Activated naive CD8-positive, alpha-beta T cell treated with anti-CD3 and anti-CD28 coated beads, Interleukin-2, amount 10 ng/mL, durations not matched to agents 7 days and 5 days (primary cell): ENCODE measurements at regions of chr20 and their contacts with region 1.

Region 1: GRCh38 chr20:53643031-53643832 is 49.6 kb upstream of the ZNF217 start:
- DNase-seq: peak; percentile 60
- ATAC-seq: peak; percentile 96
- H3K4me3 Mint-ChIP-seq: peak overlapping the region; percentile 75
- H3K27ac Mint-ChIP-seq: peak overlapping the region; percentile 96
- H3K4me1 Mint-ChIP-seq: peaks cover 43% of the 10 kb centered on the region
- H3K27me3 Mint-ChIP-seq: no peaks in the 10 kb centered on the region

Region 2: DNA sequence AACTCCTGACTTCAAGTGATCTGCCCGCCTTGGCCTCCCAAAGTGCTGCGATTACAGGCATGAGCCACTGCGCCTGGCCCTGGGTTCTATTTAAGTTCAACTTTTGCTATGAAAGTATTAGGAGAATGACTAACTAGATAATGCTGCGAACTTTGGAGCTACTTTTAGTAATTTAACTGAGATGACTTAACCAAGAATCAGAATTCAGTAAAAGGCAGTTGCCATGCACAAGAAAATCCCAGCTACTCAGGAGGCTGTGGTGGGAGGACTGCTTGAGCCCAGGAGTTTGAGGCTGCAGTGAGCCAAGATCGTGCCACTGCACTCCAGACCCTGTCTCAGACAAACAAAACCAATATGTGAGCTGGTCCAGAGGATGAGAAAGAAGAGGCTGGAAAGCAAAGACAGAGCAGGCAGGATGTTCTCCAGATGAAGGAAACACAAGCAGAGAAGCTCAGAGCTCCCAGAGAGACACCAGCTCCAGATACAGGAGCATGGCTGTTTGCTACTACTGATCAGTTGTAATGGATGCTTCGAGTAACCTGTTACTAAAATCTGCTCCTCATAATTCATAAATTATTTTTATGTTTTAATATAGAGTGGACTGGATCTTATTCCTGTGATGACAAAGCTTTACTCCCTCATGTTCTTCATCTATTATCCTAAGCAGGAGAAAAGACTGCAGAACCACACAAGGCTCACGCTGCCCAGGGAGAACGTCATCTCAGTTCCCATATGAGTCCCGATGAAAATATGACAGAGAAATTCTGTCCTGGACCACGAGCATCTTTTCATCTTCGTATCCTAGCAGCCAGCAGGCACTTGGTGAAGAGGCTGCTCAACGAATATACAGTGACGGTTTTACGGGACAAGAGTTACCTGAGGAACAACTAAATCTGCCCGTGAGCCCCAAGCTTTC is 73.4 kb before region 1 on chr20:
- POLR2A ChIA-PET with region 1: no interaction called
- DNase-seq: peak; percentile 9
- ATAC-seq: no peak
- H3K4me3 Mint-ChIP-seq: no peak overlapping the region
- H3K27ac Mint-ChIP-seq: no peak overlapping the region
- H3K4me1 Mint-ChIP-seq: peaks cover 52% of the 10 kb centered on the region
- H3K27me3 Mint-ChIP-seq: no peaks in the 10 kb centered on the region

Region 3: GRCh38 chr20:53611449-53611894 is 31.8 kb before region 1 on chr20:
- POLR2A ChIA-PET with region 1: interaction called, 15 read pairs
- DNase-seq: no peak
- ATAC-seq: no peak
- H3K4me3 Mint-ChIP-seq: no peak overlapping the region
- H3K27ac Mint-ChIP-seq: no peak overlapping the region
- H3K4me1 Mint-ChIP-seq: peaks cover 30% of the 10 kb centered on the region
- H3K27me3 Mint-ChIP-seq: no peaks in the 10 kb centered on the region

Region 4: DNA sequence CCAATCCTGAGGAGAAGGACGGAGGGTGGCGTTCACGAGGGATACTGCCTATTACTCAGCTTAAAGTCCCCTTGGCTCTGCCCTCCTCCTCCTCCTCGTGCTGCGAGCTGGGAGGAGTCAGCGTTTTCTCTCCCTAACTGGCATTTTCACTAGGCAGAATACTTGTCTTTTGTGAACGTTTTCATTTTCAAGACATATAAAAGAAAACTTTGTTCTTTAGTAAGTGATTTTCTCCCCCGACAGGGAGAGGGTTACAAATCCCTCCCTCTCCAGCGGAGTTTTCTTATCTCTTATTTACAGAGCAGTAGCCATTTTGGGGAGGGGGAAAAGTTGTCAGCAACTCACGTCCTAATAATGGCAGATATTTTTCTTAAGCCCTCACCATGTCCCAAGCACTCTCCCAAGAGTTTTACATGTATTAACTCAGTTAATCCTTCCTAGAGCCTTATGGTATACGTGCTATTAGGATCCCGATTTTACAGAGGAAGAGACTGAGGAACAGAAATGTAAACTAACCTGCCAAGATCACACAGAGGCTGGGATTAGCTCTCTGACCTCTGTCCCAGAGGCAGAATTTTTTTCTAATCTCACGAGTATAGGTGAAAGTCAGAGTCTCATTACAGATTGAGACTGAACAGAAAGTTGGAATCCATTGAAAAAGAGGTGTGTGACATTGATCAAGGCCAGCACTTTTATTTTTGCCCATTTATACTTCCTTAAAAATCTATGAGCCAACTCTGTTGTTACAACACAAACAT is 19.6 kb before region 1 on chr20:
- POLR2A ChIA-PET with region 1: interaction called, 31 read pairs
- DNase-seq: no peak
- ATAC-seq: peak; percentile 55
- H3K4me3 Mint-ChIP-seq: peak overlapping the region; percentile 80
- H3K27ac Mint-ChIP-seq: peak overlapping the region; percentile 98
- H3K4me1 Mint-ChIP-seq: peaks cover 41% of the 10 kb centered on the region
- H3K27me3 Mint-ChIP-seq: no peaks in the 10 kb centered on the region

Region 5: GRCh38 chr20:53708129-53708968 is 65.1 kb after region 1 on chr20:
- POLR2A ChIA-PET with region 1: interaction called, 16 read pairs
- DNase-seq: no peak
- ATAC-seq: peak; percentile 60
- H3K4me3 Mint-ChIP-seq: peak overlapping the region; percentile 82
- H3K27ac Mint-ChIP-seq: peak overlapping the region; percentile 94
- H3K4me1 Mint-ChIP-seq: peaks cover 50% of the 10 kb centered on the region
- H3K27me3 Mint-ChIP-seq: no peaks in the 10 kb centered on the region

Region 6: GRCh38 chr20:54140927-54141566 is 497.8 kb after region 1 on chr20:
- POLR2A ChIA-PET with region 1: no interaction called
- DNase-seq: no peak
- ATAC-seq: no peak
- H3K4me3 Mint-ChIP-seq: no peak overlapping the region
- H3K27ac Mint-ChIP-seq: no peak overlapping the region
- H3K4me1 Mint-ChIP-seq: no peaks in the 10 kb centered on the region
- H3K27me3 Mint-ChIP-seq: peaks cover 7% of the 10 kb centered on the region